ENCODE measurements at regions of chr3 and their contacts with region 1.

Region 1: GRCh38 chr3:196528639-196529233 is 13.6 kb upstream of the SMCO1 start:
- DNase-seq: peak; percentile 95
- H3K4me3 Mint-ChIP-seq: peak overlapping the region; percentile 57
- H3K27ac Mint-ChIP-seq: no peak overlapping the region
- H3K4me1 Mint-ChIP-seq: no peaks in the 10 kb centered on the region
- H3K27me3 Mint-ChIP-seq: no peaks in the 10 kb centered on the region
- CTCF ChIP-seq: peak; percentile 90

Region 2: GRCh38 chr3:196251918-196252317 is 276.8 kb before region 1 on chr3:
- CTCF ChIA-PET with region 1: interaction called, 3 read pairs
- intact Hi-C with region 1: loop called (anchors 10 kb)
- DNase-seq: no peak
- H3K4me3 Mint-ChIP-seq: no peak overlapping the region
- H3K27ac Mint-ChIP-seq: no peak overlapping the region
- H3K4me1 Mint-ChIP-seq: no peaks in the 10 kb centered on the region
- H3K27me3 Mint-ChIP-seq: no peaks in the 10 kb centered on the region
- CTCF ChIP-seq: no peak

Measured in Calu3 (cell line).